Mammary epithelial cell (primary cell): ENCODE measurements at regions of chr19 and their contacts with region 1.

Region 1: DNA sequence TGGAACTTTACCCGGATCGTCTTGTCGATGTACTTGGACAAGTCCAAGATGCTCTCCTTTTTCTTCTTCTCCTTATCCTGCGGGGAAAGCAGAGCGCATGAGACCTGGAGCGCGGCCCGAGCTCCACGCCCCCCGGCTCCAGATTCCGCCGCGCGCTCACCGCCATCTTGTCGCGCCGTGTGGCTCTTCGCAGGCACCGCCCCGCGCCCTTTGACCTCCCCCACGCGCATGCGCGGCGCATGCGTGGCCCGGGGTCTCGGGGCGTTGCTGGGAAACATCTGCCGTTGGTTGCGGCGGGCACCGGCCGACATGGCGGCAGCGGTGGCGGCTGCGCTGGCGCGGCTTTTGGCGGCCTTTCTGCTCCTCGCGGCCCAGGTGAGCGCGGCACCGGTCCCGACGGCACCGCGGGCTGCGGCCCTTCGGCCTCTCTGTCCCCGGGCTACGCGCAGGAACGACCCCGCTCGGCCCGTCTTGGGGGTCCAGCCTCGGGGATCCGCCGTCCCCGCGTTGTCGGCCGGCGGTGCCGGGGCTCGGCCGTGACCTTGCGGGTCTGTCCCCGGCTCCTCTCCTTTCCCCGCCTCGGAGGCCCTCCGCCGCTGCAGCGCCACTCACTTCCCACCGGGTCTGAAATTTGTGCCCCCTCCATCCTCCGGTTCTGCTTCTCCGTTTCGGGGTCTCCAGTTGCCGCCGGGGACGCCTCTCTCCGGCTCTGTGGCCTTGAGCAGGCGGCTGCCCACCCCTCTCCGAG is at the starts of genes LSM7 and SPPL2B:
- DNase-seq: peak; percentile 83
- H3K4me3 ChIP-seq: peak within 1 kb of the TSS; percentile 69 to 81 (median 81)
- H3K27ac ChIP-seq: peak within 1 kb of the TSS; percentile 79
- H3K4me1 ChIP-seq: peaks cover 13% of the 10 kb centered on the region
- H3K27me3 ChIP-seq: no peaks in the 10 kb centered on the region
- CTCF ChIP-seq: no peak
- total RNA-seq, gene LSM7: 67.7 to 91.6 TPM
- total RNA-seq, gene SPPL2B: 21.8 to 50.7 TPM

Region 2: DNA sequence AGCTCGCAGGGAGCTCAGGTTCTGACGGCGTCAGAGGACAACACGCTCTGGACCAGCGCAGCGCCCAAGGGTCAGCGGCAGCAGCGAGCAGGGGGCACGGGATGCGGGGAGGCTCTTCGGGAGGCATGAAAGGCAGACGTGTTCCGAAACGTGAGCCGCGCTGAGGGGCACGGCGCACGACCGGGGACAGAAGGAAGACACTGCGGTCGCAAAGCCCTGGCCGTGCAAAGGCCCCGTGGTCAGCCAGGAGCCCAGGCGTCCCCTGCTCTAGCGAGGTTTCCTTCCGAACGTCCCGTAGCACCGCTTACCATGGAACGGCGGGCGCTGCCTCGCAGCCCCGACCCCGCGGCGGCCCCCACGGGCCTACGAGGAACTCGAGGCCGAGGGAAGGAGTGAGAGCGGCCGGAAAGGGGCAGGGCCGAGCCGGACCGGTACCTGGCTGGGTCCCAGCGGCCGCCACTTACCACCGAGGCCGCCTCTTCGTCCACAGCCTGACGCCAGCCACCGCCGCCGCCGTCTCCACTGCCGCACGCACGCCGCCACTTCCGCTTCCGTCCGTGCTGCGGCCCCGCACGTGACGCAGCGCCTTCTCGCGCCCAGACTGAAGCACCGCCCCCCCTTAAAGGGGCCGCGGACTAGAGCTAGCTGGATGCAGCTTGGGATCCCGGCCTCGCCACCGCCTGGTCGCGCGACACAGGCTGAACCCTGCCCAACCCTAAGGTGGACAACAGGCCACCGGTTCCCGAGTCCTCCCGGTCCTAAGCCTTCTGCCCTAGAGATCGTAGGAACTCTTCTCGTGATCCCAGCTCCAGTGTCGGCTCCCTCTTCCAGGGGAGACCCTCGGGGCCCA is 452.7 kb before region 1 on chr19:
- CTCF ChIA-PET with region 1: no interaction called
- dilution Hi-C with region 1: loop called (anchors 5 kb)
- in situ Hi-C with region 1: no loop called
- intact Hi-C with region 1: no loop called
- DNase-seq: peak; percentile 86
- H3K4me3 ChIP-seq: peak overlapping the region; percentile 76 to 100 (median 88)
- H3K27ac ChIP-seq: peak overlapping the region; percentile 73
- H3K4me1 ChIP-seq: peaks cover 28% of the 10 kb centered on the region
- H3K27me3 ChIP-seq: no peaks in the 10 kb centered on the region
- CTCF ChIP-seq: no peak

Region 3: GRCh38 chr19:1935484-1936208 is 392.9 kb before region 1 on chr19:
- CTCF ChIA-PET with region 1: no interaction called
- dilution Hi-C with region 1: loop called (anchors 5 kb)
- in situ Hi-C with region 1: no loop called
- intact Hi-C with region 1: no loop called
- DNase-seq: peak; percentile 24
- H3K4me3 ChIP-seq: no peak overlapping the region
- H3K27ac ChIP-seq: no peak overlapping the region
- H3K4me1 ChIP-seq: peaks cover 10% of the 10 kb centered on the region
- H3K27me3 ChIP-seq: no peaks in the 10 kb centered on the region
- CTCF ChIP-seq: no peak

Region 4: GRCh38 chr19:2221918-2222317 is 106.7 kb before region 1 on chr19:
- CTCF ChIA-PET with region 1: no interaction called
- dilution Hi-C with region 1: no loop called
- in situ Hi-C with region 1: no loop called
- intact Hi-C with region 1: no loop called
- DNase-seq: no peak
- H3K4me3 ChIP-seq: no peak overlapping the region
- H3K27ac ChIP-seq: no peak overlapping the region
- H3K4me1 ChIP-seq: no peaks in the 10 kb centered on the region
- H3K27me3 ChIP-seq: no peaks in the 10 kb centered on the region
- CTCF ChIP-seq: peak in 1 of 2 donors; percentile 15

Region 5: GRCh38 chr19:2365201-2365970 is 36.8 kb after region 1 on chr19:
- CTCF ChIA-PET with region 1: no interaction called
- dilution Hi-C with region 1: loop called (anchors 5 kb)
- in situ Hi-C with region 1: no loop called
- intact Hi-C with region 1: no loop called
- DNase-seq: no peak
- H3K4me3 ChIP-seq: no peak overlapping the region
- H3K27ac ChIP-seq: no peak overlapping the region
- H3K4me1 ChIP-seq: no peaks in the 10 kb centered on the region
- H3K27me3 ChIP-seq: peaks cover 6% of the 10 kb centered on the region
- CTCF ChIP-seq: no peak

Region 6: GRCh38 chr19:2412449-2412848 is 83.9 kb after region 1 on chr19:
- CTCF ChIA-PET with region 1: no interaction called
- dilution Hi-C with region 1: loop called (anchors 5 kb)
- in situ Hi-C with region 1: no loop called
- intact Hi-C with region 1: no loop called
- DNase-seq: no peak
- H3K4me3 ChIP-seq: no peak overlapping the region
- H3K27ac ChIP-seq: no peak overlapping the region
- H3K4me1 ChIP-seq: no peaks in the 10 kb centered on the region
- H3K27me3 ChIP-seq: no peaks in the 10 kb centered on the region
- CTCF ChIP-seq: no peak

Region 7: GRCh38 chr19:2438178-2438864 is 109.7 kb after region 1 on chr19:
- CTCF ChIA-PET with region 1: no interaction called
- dilution Hi-C with region 1: loop called (anchors 5 kb)
- in situ Hi-C with region 1: no loop called
- intact Hi-C with region 1: no loop called
- DNase-seq: no peak
- H3K4me3 ChIP-seq: no peak overlapping the region
- H3K27ac ChIP-seq: no peak overlapping the region
- H3K4me1 ChIP-seq: no peaks in the 10 kb centered on the region
- H3K27me3 ChIP-seq: no peaks in the 10 kb centered on the region
- CTCF ChIP-seq: no peak

Region 8: DNA sequence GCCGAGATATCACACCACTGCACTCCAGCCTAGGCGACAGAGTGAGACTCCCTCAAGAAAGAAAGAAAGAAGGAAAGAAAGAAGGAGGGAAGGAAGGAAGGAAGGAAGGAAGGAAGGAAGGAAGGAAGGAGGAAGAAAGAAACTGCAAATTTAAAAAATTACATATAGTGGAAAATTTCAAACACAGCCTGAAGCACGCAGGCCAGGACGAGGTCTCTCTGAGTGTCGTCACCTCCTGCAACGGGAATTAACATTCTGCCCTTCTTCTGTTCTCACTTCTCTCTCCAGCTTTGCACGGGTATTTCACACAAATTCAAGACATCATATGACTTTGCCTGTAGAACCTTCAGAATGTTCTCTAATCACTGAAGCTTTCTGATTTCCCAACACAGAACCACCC is 265.7 kb after region 1 on chr19:
- CTCF ChIA-PET with region 1: no interaction called
- dilution Hi-C with region 1: loop called (anchors 5 kb)
- in situ Hi-C with region 1: no loop called
- intact Hi-C with region 1: no loop called
- DNase-seq: no peak
- H3K4me3 ChIP-seq: no peak overlapping the region
- H3K27ac ChIP-seq: no peak overlapping the region
- H3K4me1 ChIP-seq: peaks cover 5% of the 10 kb centered on the region
- H3K27me3 ChIP-seq: peaks cover 2% of the 10 kb centered on the region
- CTCF ChIP-seq: no peak